A673 (cell line): ENCODE measurements at regions of chr18 and their contacts with region 1.

Region 1: DNA sequence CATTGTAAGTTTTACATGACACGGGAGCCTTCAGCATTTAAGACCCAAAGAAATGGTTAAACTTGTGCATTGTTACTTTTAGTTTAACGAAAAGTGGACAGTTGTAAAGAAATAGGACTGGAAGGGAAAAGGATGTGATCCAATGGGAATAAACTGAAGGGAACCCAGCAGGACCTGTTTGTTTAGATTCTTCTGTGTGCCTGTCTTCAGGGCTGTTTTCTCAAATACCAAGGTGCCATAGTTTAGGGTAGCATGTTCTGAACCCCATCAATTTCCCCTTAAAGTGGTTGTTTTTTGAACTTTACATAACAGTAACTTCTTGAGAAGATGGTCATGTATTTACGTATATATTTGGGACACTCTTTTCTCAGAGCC is 30.2 kb upstream of the CABLES1 start:
- DNase-seq: no peak
- H3K4me3 ChIP-seq: no peak overlapping the region
- H3K27ac ChIP-seq: no peak overlapping the region
- H3K4me1 ChIP-seq: peaks cover 32% of the 10 kb centered on the region
- H3K27me3 ChIP-seq: no peaks in the 10 kb centered on the region
- CTCF ChIP-seq: no peak

Region 2: DNA sequence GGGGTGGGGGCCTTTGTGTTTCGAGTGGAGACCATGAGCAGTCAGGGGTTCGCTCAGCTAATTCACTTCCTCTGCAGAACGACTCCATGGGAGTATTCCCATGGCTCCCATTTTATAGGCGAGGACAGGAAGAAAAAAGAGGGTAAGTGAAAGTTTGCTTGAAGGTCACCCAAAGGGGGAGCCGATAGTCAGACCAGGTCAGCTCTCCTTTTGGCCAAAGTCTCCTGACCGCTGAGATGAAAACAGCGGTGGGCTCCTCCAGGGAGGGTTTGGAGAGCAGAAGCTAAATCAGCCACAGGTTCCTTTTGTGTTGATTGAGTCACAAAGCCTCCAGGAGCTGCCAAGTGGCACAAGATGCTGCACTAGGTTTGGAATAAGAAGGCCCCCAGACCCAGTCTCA is 653.2 kb before region 1 on chr18:
- CTCF ChIA-PET with region 1: no interaction called
- POLR2A ChIA-PET with region 1: interaction called, 14 read pairs
- intact Hi-C with region 1: no loop called
- DNase-seq: no peak
- H3K4me3 ChIP-seq: no peak overlapping the region
- H3K27ac ChIP-seq: no peak overlapping the region
- H3K4me1 ChIP-seq: no peaks in the 10 kb centered on the region
- H3K27me3 ChIP-seq: peaks cover 22% of the 10 kb centered on the region
- CTCF ChIP-seq: no peak

Region 3: DNA sequence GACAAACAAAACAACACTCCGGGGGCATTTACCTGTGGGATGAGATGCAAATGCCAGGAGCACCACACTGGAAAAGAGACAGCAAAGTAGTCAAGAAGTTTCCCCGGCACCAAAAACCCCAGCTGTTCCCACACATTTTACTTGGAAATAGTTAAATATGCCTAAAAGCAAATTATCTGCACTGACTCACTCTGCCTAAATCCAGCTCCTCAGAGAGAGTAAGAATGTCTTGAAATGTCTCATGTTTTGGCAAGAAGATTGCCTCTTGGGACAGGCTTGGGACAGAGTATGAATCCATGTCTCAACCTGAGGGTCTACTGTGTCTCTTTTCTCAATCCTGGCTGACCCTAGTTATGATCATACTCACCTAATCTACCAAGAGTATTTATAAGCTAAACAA is 260.6 kb after region 1 on chr18:
- CTCF ChIA-PET with region 1: no interaction called
- POLR2A ChIA-PET with region 1: no interaction called
- intact Hi-C with region 1: no loop called
- DNase-seq: peak; percentile 47
- H3K4me3 ChIP-seq: no peak overlapping the region
- H3K27ac ChIP-seq: no peak overlapping the region
- H3K4me1 ChIP-seq: no peaks in the 10 kb centered on the region
- H3K27me3 ChIP-seq: no peaks in the 10 kb centered on the region
- CTCF ChIP-seq: no peak